ENCODE measurements at regions of chr14 and their contacts with region 1.

Region 1: GRCh38 chr14:35046048-35046741 is at the start of gene FAM177A1:
- DNase-seq: peak; percentile 95 to 100 (median 98)

Region 2: DNA sequence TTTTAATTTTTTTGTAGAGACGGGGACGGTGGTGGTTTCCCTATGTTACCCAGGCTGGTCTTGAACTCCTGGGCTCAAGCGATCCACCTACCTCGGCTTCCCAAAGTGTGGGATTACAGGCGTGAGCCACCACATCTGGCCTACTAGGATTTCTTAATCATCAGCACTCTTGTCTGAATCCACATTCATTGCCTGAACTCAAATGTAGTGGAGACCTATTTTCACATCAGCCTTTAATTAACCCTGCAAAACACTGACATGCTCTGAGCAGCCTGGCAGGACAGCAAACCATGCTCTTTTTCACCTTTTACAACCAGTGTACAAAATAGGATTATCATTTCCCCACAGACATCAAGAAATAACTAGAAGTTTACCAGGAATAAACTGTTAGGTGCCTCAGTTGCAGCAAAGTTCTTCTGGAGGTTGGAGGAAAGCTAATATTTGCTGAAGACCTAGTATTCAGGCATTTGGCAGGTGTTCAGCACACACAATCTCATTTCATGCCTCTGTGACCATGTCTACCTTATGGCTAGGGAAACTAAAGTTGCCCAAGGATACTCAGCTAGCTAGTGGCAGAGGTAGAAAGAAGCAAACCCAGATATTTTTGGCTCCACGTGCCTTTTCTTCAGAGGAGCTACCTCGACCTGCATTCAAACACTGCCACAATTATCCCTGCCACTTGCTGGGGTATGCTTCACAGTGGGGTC is 369.5 kb before region 1 on chr14:
- intact Hi-C with region 1: loop called (anchors 5 kb)
- DNase-seq: no peak

Region 3: GRCh38 chr14:34875031-34875922 is 170.9 kb before region 1 on chr14 and contains the start of gene BAZ1A:
- intact Hi-C with region 1: loop called (anchors 2 kb)
- DNase-seq: peak in 9 of 10 donors; percentile 18 to 89 (median 45)

Region 4: DNA sequence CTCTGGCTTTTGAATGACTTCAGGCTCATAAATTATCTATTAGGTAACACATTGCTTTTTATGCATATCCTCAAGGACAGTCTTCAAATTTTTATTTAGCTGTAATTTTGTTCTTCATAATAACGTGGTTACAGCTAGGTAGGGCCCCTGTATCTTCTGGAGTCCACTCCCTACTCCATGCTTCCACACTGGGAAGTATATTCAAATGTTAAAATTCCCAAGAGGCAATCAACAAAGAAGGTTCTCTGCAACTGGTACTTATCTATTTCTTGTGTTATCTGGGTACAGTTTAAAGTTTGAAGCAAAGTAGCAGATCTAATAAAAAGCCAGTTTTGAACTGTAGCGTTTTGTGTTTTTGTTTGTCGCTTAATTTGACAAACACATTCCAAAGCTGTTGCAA is 150.9 kb before region 1 on chr14:
- intact Hi-C with region 1: no loop called
- DNase-seq: no peak

Region 5: GRCh38 chr14:34982417-34983147 is 63.6 kb before region 1 on chr14 and contains the start of gene SRP54:
- intact Hi-C with region 1: loop called (anchors 1 kb)
- DNase-seq: peak; percentile 95 to 100 (median 98)

Region 6: DNA sequence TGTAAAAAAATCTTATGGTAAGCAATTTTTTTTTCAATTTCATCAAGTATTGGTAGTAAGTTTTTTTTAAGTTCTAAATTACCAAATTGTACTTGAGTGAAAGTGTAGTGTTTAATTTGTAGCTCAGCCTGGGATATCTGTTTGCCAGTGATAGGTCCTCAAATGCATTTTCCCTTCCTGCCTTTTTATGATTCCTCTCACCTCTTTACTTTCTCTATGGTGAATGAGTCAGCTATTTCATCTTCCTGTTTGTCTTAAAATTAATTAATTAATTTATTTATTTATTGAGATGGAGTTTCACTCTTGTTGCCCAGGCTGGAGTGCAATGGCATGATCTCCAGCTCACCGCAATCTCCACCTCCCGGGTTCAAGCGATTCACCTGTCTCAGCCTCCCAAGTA is 52.8 kb before region 1 on chr14:
- intact Hi-C with region 1: no loop called
- DNase-seq: no peak

Region 7: DNA sequence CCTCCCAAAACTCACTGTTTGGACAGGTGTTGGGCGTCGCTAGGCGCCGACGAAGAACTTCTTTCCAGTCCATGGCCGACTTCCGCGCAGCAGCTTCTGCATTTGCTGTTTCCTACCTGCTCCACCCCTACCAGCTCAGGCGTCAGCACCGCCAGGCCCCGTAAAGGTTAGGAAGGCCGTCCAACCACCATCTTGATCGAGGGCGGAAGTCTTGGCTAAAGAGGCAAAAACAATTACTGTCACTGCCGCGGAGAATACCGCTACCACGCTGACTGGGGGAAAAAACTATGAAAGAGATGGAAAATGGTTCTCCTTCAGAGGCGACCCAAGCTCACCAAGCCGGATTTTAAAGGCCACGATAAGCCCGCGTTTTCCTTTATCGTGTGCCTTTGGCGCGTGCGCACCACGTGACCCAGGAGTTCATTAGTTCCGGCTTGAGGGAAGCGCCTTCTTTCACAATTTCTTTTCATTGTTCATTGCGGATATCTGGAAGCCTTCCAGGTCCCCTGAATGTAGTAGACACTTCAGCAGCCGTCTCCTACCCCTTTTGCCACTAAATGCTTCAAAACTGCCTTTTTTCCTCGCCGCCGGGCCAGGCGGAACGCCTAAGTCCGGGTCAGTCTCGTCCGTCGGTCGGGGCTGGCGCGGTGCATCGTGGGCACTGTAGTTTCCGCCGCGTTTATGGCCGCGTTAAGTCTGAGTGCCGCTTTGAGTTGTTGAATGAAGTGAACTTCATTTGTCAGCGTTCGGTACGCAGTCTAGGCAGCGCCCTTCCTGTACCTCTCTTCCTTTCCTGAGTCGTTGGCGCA is 75.9 kb after region 1 on chr14 and contains the starts of genes PPP2R3C and PRORP:
- intact Hi-C with region 1: loop called (anchors 1 kb)
- DNase-seq: peak; percentile 82 to 98 (median 89)

Region 8: GRCh38 chr14:35416108-35416750 is 370.0 kb after region 1 on chr14:
- intact Hi-C with region 1: loop called (anchors 10 kb)
- DNase-seq: no peak

Measured in posterior cingulate gyrus (tissue), 11 donors.